Naive thymus-derived CD4-positive, alpha-beta T cell (primary cell): ENCODE measurements at regions of chr1 and their contacts with region 1.

Region 1: DNA sequence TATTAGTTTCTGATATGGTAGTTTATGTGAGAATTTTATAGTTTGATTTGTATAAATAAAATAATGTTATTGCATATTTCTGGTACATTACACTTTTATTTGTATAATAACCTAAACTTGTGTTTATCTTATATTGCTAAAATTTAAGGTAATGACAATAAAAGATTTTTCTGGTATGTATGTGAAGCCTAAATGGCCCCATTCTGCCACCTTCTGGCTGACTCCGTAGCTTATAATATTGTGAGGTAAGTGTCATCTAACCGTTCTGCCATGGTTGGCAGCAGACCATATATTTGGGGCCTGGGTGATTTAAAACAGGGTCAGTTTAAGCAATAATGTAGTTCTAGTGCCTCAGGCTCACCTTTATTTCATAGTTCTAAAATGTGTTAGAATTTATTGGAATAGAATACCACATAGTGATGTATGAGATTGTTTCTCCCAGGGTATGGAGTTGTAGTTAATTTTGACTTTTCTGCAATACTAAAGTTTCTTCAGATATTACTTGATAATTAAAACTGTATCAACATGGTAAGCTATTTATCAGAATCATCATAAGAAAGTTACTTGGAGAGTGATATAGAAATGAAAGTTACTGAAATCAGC is 21.2 kb upstream of the PRKACB start:
- DNase-seq: peak in 7 of 9 donors; percentile 20 to 58 (median 44)
- ATAC-seq: peak; percentile 78
- H3K4me3 ChIP-seq: no peak overlapping the region
- H3K4me3 Mint-ChIP-seq: no peak overlapping the region
- H3K27ac ChIP-seq: no peak overlapping the region
- H3K27ac Mint-ChIP-seq: no peak overlapping the region
- H3K4me1 ChIP-seq: no peaks in the 10 kb centered on the region
- H3K4me1 Mint-ChIP-seq: no peaks in the 10 kb centered on the region
- H3K27me3 ChIP-seq: no peaks in the 10 kb centered on the region
- H3K27me3 Mint-ChIP-seq: peaks cover 0 to 10% (median 0%) of the 10 kb centered on the region in 5 donors

Region 2: DNA sequence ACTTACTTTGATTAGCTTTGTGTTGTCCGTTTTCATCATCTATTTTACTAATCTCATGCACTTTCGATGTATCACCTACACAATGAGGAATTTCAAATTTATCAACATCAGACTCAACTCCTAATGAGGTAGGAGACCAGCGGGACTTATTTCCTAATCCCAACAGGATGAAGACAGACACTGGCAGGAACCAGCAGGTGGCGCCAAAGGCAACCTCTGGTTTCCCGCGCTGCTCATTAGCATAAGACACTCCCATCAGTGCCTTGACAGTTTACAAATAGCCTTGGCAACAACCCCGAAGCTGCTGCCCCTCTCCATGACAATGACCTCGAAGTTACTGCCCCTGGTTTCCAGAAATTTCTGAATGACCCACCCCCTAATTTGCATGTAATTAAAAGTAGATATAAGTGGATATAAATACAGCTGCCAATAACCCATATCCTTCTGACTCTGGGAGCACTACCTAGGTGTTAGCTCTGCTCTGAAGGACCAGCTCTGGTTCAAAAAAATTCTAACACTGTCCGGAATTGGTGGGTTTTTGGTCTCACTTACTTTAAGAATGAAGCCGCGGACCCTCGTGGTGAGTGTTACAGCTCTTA is 1347.4 kb before region 1 on chr1:
- CTCF ChIA-PET with region 1: no interaction called
- POLR2A ChIA-PET with region 1: no interaction called
- intact Hi-C with region 1: loop called in 1 of 2 experiments (anchors 10 kb)
- DNase-seq: peak in 1 of 9 donors; percentile 2
- ATAC-seq: no peak
- H3K4me3 ChIP-seq: no peak overlapping the region
- H3K4me3 Mint-ChIP-seq: no peak overlapping the region
- H3K27ac ChIP-seq: no peak overlapping the region
- H3K27ac Mint-ChIP-seq: no peak overlapping the region
- H3K4me1 ChIP-seq: no peaks in the 10 kb centered on the region
- H3K4me1 Mint-ChIP-seq: peaks cover 0 to 4% (median 0%) of the 10 kb centered on the region in 7 donors
- H3K27me3 ChIP-seq: no peaks in the 10 kb centered on the region
- H3K27me3 Mint-ChIP-seq: peaks cover 0 to 8% (median 0%) of the 10 kb centered on the region in 5 donors

Region 3: DNA sequence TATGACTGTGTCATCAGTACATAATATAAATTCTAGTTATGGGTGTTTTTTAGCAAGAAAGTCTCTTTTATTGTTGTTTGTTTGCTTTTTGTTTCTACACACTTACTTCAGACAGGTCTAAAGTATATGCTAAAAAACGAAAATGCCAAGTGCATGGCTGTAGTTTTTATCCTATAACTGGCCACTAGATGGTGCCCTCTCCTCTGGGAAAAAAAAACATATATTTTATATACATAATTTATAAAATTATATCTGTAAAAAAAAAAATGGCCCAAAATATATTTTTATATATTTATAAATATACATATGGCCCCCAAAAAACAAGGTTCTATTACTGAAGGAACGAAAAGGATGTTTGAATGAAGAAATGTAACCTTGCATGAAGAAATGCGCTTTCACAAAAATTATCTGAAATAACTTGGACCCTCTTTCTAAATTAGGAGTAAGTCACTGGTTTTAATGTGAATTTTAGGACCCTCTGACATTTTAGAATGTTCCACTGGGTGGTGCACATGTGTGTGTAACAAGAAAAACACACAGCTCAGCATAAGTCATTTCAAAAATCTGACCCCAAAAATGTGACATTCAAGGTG is 217.5 kb before region 1 on chr1:
- CTCF ChIA-PET with region 1: interaction called, 3 read pairs
- POLR2A ChIA-PET with region 1: no interaction called
- intact Hi-C with region 1: loop called (anchors 1 kb)
- DNase-seq: peak in 5 of 9 donors; percentile 16 to 34 (median 25)
- ATAC-seq: peak; percentile 53
- H3K4me3 ChIP-seq: no peak overlapping the region
- H3K4me3 Mint-ChIP-seq: no peak overlapping the region
- H3K27ac ChIP-seq: no peak overlapping the region
- H3K27ac Mint-ChIP-seq: no peak overlapping the region
- H3K4me1 ChIP-seq: no peaks in the 10 kb centered on the region
- H3K4me1 Mint-ChIP-seq: no peaks in the 10 kb centered on the region
- H3K27me3 ChIP-seq: no peaks in the 10 kb centered on the region
- H3K27me3 Mint-ChIP-seq: peaks cover 9 to 23% (median 20%) of the 10 kb centered on the region in 5 donors

Region 4: DNA sequence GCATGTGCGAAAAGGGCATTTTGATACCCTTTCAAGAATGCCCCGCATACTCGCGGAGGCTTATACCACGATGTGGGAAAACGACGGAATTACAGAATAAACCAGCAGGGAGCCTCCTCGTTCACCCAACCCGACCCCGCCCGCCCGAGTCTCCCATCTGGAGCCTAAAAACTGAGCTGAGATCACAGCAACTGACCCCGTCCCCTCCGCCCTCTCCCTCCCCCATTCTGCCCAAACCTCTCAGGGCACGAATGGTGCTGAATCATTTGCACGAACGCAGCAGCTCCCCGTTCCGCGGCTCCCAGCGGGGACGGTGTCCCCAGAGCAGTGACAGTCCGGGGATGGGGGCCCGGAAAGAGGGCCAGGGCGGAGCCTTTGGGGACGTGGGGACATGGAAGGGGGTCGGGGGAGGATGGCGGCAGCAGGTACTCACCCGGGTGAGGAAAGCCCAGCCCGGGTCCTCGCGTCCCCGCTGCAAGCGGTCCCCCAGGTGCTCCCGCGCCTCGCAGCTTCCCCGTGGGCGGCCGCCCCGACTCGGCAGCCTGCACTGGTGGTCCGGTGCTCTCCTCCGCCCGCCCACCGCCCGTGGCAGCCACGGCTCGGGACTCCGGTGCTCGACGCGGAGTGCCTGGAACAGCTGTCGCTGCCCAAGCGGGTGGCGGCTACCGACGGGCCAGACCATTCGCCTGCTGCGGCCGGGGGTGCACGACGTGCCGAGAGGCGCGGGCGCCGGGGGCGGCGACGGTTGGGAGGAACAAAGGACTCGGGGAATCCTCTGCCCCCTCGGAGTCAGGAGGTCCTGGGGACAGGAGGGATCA is 124.2 kb before region 1 on chr1 and contains the start of gene TTLL7:
- CTCF ChIA-PET with region 1: no interaction called
- POLR2A ChIA-PET with region 1: no interaction called
- intact Hi-C with region 1: loop called in 1 of 2 experiments (anchors 5 kb)
- DNase-seq: peak; percentile 10 to 75 (median 23)
- ATAC-seq: peak; percentile 81
- H3K4me3 ChIP-seq: peak within 1 kb of the TSS; percentile 53
- H3K4me3 Mint-ChIP-seq: peak within 1 kb of the TSS; percentile 74 to 92 (median 85)
- H3K27ac ChIP-seq: no peak within 1 kb of the TSS
- H3K27ac Mint-ChIP-seq: peak within 1 kb of the TSS in 2 of 9 donors; percentile 56 to 58
- H3K4me1 ChIP-seq: peaks cover 6 to 7% of the 10 kb centered on the region in 2 donors
- H3K4me1 Mint-ChIP-seq: peaks cover 9 to 20% (median 17%) of the 10 kb centered on the region in 7 donors
- H3K27me3 ChIP-seq: peaks cover 4 to 13% of the 10 kb centered on the region in 2 donors
- H3K27me3 Mint-ChIP-seq: peaks cover 61 to 78% (median 68%) of the 10 kb centered on the region in 5 donors
- total RNA-seq, gene TTLL7: 0.27 to 2.1 (median 1.1) TPM in 3 of 5 experiments, not detected in the others

Region 5: GRCh38 chr1:84107955-84108354 is 14.9 kb before region 1 on chr1:
- CTCF ChIA-PET with region 1: no interaction called
- POLR2A ChIA-PET with region 1: no interaction called
- intact Hi-C with region 1: no loop called
- DNase-seq: no peak
- ATAC-seq: no peak
- H3K4me3 ChIP-seq: no peak overlapping the region
- H3K4me3 Mint-ChIP-seq: no peak overlapping the region
- H3K27ac ChIP-seq: no peak overlapping the region
- H3K27ac Mint-ChIP-seq: no peak overlapping the region
- H3K4me1 ChIP-seq: no peaks in the 10 kb centered on the region
- H3K4me1 Mint-ChIP-seq: peaks cover 0 to 6% (median 0%) of the 10 kb centered on the region in 7 donors
- H3K27me3 ChIP-seq: no peaks in the 10 kb centered on the region
- H3K27me3 Mint-ChIP-seq: no peaks in the 10 kb centered on the region

Region 6: DNA sequence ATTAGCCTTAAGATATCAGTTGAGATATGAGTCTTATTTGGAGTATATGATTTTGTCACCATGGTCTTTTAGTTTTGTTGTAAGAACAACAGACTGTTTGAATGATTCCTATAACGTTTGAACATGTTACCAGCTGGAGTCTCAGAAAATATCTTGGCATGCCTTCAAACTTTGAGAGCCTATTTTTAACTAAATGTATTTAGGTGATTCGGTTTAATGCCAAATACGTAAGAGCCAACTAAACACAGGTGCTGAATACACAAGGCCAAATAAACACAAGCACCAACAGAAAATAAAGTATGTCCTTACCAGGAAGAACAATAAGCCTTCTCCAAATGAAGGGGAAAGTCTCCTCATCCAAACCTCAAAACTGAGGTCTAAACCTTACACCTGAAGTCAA is 69.8 kb after region 1 on chr1:
- CTCF ChIA-PET with region 1: no interaction called
- POLR2A ChIA-PET with region 1: no interaction called
- intact Hi-C with region 1: no loop called
- DNase-seq: no peak
- ATAC-seq: no peak
- H3K4me3 ChIP-seq: no peak overlapping the region
- H3K4me3 Mint-ChIP-seq: no peak overlapping the region
- H3K27ac ChIP-seq: no peak overlapping the region
- H3K27ac Mint-ChIP-seq: no peak overlapping the region
- H3K4me1 ChIP-seq: no peaks in the 10 kb centered on the region
- H3K4me1 Mint-ChIP-seq: peaks cover 0 to 9% (median 4%) of the 10 kb centered on the region in 7 donors
- H3K27me3 ChIP-seq: no peaks in the 10 kb centered on the region
- H3K27me3 Mint-ChIP-seq: no peaks in the 10 kb centered on the region

Region 7: DNA sequence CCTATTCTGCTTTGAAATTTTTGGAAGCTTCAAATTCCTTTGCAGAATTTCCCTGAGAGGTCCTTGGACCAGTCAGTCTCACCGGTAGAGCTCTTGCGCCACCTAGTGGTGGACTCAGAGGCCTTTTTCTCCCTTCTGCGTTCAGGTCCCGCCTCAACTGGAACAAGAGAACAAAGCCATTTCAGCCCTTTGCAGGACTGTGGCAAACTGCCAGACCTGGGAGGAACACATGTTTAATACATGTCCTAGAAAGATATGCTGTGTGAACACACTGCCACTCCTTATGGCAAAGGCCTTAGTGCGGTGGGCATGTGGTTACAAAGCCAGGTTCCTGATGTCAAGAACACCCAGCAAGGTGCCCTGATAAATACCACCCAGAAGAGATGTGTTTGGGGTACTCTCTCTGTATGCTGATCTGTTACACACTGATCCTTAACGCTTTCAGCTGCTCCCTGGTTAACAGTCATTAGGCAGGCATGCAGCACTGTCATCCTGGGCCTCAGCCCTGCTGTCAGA is 649.6 kb after region 1 on chr1:
- CTCF ChIA-PET with region 1: interaction called, 3 read pairs
- POLR2A ChIA-PET with region 1: no interaction called
- intact Hi-C with region 1: loop called in 1 of 2 experiments (anchors 1 kb)
- DNase-seq: peak; percentile 51 to 74 (median 64)
- ATAC-seq: peak; percentile 83
- H3K4me3 ChIP-seq: no peak overlapping the region
- H3K4me3 Mint-ChIP-seq: no peak overlapping the region
- H3K27ac ChIP-seq: no peak overlapping the region
- H3K27ac Mint-ChIP-seq: no peak overlapping the region
- H3K4me1 ChIP-seq: no peaks in the 10 kb centered on the region
- H3K4me1 Mint-ChIP-seq: peaks cover 0 to 4% (median 0%) of the 10 kb centered on the region in 7 donors
- H3K27me3 ChIP-seq: no peaks in the 10 kb centered on the region
- H3K27me3 Mint-ChIP-seq: peaks cover 5 to 31% (median 9%) of the 10 kb centered on the region in 5 donors